ENCODE measurements at regions of chr4 and their contacts with region 1.

Region 1: GRCh38 chr4:95095348-95095974 is 337.7 kb downstream of the BMPR1B start:
- DNase-seq: peak; percentile 30
- H3K4me3 ChIP-seq: peak overlapping the region in 1 of 2 experiments; percentile 23; a peak in 1 of 4 replicates
- H3K27ac ChIP-seq: peak overlapping the region in 1 of 2 experiments; percentile 16; a peak in 1 of 4 replicates
- H3K4me1 ChIP-seq: peaks cover 0 to 2% of the 10 kb centered on the region in 2 experiments; a peak in 2 of 4 replicates
- H3K27me3 ChIP-seq: no peaks in the 10 kb centered on the region
- CTCF ChIP-seq: peak; percentile 84
- EP300 ChIP-seq: no peak
- RAD21 ChIP-seq: peak; percentile 93

Region 2: GRCh38 chr4:94650690-94651089 is 444.8 kb before region 1 on chr4:
- CTCF ChIA-PET with region 1: interaction called, 13 read pairs
- POLR2A ChIA-PET with region 1: no interaction called
- DNase-seq: no peak
- H3K4me3 ChIP-seq: no peak overlapping the region
- H3K27ac ChIP-seq: peak overlapping the region in 1 of 2 experiments; percentile 99; a peak in 2 of 4 replicates
- H3K4me1 ChIP-seq: peaks cover 0 to 18% of the 10 kb centered on the region in 2 experiments; a peak in 2 of 4 replicates
- H3K27me3 ChIP-seq: no peaks in the 10 kb centered on the region
- CTCF ChIP-seq: no peak
- EP300 ChIP-seq: no peak
- RAD21 ChIP-seq: no peak

Region 3: DNA sequence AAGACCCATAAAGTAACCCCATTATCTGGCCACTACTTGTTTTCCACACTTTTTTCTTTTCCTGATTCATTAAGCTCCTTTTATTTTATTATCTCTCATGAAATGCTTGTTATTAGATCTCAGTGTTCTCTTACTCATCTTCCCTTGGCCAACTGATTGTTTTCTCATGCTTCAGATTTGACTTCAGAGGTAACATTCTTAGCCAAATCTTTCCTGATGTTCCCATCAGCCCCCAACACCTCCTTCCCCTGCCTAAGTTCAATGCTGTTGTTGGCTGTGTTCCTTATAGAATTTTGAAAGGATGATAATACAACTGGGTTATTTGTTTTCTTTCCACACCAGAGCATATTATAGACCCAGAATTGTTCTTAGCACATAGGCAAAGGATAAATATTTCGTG is 262.1 kb before region 1 on chr4:
- CTCF ChIA-PET with region 1: no interaction called
- POLR2A ChIA-PET with region 1: no interaction called
- DNase-seq: no peak
- H3K4me3 ChIP-seq: no peak overlapping the region
- H3K27ac ChIP-seq: no peak overlapping the region
- H3K4me1 ChIP-seq: no peaks in the 10 kb centered on the region
- H3K27me3 ChIP-seq: no peaks in the 10 kb centered on the region
- CTCF ChIP-seq: no peak
- EP300 ChIP-seq: no peak
- RAD21 ChIP-seq: no peak

Region 4: DNA sequence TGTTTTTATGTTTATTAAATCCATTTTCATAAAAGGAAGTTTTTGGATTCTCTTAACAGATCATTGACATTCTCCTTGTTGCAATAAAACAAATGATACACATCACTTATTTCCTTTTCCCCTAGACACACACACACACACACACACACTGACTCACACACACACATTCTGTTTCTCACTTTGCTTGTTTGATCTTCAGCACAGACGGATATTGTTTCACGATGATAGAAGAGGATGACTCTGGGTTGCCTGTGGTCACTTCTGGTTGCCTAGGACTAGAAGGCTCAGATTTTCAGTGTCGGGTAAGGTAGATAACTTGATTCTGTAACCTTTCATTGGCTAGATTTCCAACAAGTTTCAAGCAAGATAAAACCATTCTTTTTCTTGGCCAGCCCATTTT is 19.1 kb after region 1 on chr4:
- CTCF ChIA-PET with region 1: no interaction called
- POLR2A ChIA-PET with region 1: no interaction called
- DNase-seq: no peak
- H3K4me3 ChIP-seq: no peak overlapping the region
- H3K27ac ChIP-seq: no peak overlapping the region
- H3K4me1 ChIP-seq: peaks cover 0 to 11% of the 10 kb centered on the region in 2 experiments; a peak in 2 of 4 replicates
- H3K27me3 ChIP-seq: no peaks in the 10 kb centered on the region
- CTCF ChIP-seq: no peak
- EP300 ChIP-seq: no peak
- RAD21 ChIP-seq: no peak

Measured in SK-N-SH (cell line).